Sciatic nerve (tissue), 2 donors: ENCODE measurements at regions of chr3 and their contacts with region 1.

Region 1: DNA sequence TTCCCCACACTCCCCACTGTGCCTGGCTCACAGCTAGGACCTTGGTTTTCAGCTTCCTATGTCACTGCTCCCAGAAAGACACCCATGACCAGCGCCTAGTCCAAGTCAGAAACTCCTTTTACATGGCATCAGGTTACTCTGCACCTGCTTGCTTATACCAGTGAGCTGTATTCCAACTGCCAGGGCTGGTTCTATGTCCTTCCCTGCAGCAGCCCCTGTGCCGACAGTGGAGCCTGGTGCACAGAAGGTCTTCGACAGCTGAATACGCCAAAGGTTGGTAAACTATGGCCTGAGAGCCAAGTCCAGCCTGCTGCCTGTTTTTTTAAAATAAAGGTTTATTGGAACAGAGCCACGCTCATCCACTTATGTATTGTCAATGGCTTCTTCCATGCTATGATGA is 102.5 kb downstream of the IQSEC1 start:
- DNase-seq: no peak
- ATAC-seq: no peak

Region 2: GRCh38 chr3:12901623-12902045 is 69.0 kb before region 1 on chr3:
- intact Hi-C with region 1: loop called (anchors 10 kb)
- DNase-seq: no peak
- ATAC-seq: no peak